ENCODE measurements at regions of chr4 and their contacts with region 1.

Region 1: GRCh38 chr4:38174801-38175200 is 214.6 kb downstream of the PTTG2 start:
- DNase-seq: no peak
- H3K4me3 Mint-ChIP-seq: no peak overlapping the region
- H3K27ac Mint-ChIP-seq: no peak overlapping the region
- H3K4me1 Mint-ChIP-seq: peaks cover 40% of the 10 kb centered on the region
- H3K27me3 Mint-ChIP-seq: peaks cover 30% of the 10 kb centered on the region

Region 2: GRCh38 chr4:38154681-38155608 is 19.9 kb before region 1 on chr4:
- CTCF ChIA-PET with region 1: interaction called, 15 read pairs
- POLR2A ChIA-PET with region 1: interaction called, 13 read pairs
- DNase-seq: peak; percentile 53
- H3K4me3 Mint-ChIP-seq: peak overlapping the region; percentile 22
- H3K27ac Mint-ChIP-seq: peak overlapping the region; percentile 75
- H3K4me1 Mint-ChIP-seq: peaks cover 57% of the 10 kb centered on the region
- H3K27me3 Mint-ChIP-seq: peaks cover 6% of the 10 kb centered on the region

Region 3: GRCh38 chr4:38223782-38224236 is 49.0 kb after region 1 on chr4:
- CTCF ChIA-PET with region 1: no interaction called
- POLR2A ChIA-PET with region 1: no interaction called
- DNase-seq: no peak
- H3K4me3 Mint-ChIP-seq: no peak overlapping the region
- H3K27ac Mint-ChIP-seq: no peak overlapping the region
- H3K4me1 Mint-ChIP-seq: no peaks in the 10 kb centered on the region
- H3K27me3 Mint-ChIP-seq: peaks cover 9% of the 10 kb centered on the region